Posterior vena cava (tissue), 2 donors: ENCODE measurements at regions of chr6 and their contacts with region 1.

Region 1: GRCh38 chr6:26363882-26364701 is 906 bp upstream of the BTN3A2 start:
- DNase-seq: no peak

Region 2: DNA sequence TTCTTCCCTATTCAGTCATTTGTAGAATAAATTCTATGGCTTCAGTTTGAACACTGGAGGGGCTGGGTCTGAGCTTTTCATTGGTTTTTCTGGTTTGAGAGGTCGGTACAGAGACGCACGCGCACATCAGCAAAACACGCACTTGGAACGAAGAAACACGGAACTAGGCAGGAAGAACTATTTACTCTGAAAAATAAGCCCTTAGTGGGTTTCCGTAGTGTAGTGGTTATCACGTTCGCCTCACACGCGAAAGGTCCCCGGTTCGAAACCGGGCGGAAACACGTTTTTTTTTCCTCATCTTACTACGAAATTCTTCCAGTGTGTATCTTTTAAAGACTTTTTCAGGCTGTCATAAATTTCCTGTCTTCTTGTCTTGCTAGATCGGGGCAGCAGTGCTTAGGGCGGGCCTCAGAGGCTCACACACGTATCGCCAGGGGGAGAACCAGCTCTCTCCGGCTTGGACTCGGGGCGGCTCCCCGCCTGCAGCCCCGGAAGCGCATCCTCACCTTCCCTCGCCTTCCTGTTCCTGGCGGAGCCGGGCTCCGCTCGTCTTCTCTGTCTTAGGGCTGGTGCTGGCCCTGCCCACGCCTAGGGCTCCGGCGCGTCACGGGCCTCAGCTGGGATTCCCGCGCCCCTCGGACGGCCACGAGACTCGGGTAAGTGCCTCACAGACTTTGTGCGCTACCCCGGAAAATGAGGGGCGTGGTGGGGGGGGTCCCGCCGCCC is 173.9 kb after region 1 on chr6 and contains the start of gene HMGN4:
- intact Hi-C with region 1: loop called in 1 of 2 experiments (anchors 10 kb)
- DNase-seq: peak; percentile 95
- total RNA-seq, gene HMGN4: 54.2 to 62.0 TPM